ENCODE measurements at regions of chr4 and their contacts with region 1.

Region 1: DNA sequence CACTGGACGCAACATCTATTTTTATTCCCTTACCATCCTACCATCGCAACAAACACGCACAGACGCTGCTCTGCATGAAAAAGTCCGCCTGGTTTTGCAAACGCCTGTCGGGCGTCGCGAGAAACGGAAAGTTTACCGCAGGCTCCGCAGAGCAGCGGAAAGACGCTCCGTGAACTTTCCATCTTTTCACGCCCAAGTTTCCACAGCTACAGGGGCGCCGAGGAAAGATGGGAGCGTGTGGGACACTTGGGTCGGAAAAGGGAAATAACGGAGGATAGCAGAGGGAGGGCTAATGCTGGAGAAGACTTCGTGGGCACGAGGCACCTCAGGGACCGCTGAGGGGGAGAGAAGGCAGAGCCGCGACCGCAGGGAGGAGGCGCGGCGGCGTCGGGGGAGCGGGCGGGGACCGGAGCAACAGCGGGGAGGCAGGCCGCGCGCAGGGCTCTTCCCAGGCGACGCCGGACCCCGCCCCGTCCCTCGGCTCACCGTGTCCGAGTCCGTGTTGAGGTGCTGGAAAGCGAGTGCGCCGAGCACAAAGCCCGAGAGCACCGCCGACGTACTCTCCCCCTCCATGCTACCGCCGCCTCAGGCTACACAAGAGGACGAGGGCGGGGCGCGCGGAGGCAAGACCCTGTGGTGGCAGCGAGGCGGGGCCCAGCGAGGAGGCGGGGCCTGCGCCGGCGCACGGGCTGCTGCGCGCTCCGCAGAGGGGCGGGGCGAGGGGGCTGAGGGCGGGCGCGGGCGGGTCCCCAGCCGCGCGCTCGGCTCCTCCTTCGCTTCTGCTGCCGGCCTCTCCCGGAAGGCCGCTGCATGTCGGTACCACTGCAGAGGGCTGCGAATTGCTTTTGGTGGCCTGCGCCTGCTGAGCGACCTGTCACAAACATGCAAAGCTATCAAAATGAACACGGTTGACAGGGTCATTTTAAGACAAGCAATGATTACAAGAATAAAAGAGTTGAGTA is at the start of gene ABRAXAS1:
- DNase-seq: peak; percentile 98
- H3K4me3 Mint-ChIP-seq: peak within 1 kb of the TSS; percentile 96
- H3K27ac Mint-ChIP-seq: peak within 1 kb of the TSS; percentile 95
- H3K4me1 Mint-ChIP-seq: peaks cover 7% of the 10 kb centered on the region
- H3K27me3 Mint-ChIP-seq: no peaks in the 10 kb centered on the region
- total RNA-seq, gene ABRAXAS1: 10.4 and 12.0 TPM in 2 replicates

Region 2: GRCh38 chr4:83455281-83456129 is 29.3 kb before region 1 on chr4 and contains the starts of genes HELQ and MRPS18C:
- intact Hi-C with region 1: loop called (anchors 1 kb)
- DNase-seq: peak; percentile 98
- H3K4me3 Mint-ChIP-seq: peak within 1 kb of the TSS; percentile 99
- H3K27ac Mint-ChIP-seq: peak within 1 kb of the TSS; percentile 100
- H3K4me1 Mint-ChIP-seq: peaks cover 26% of the 10 kb centered on the region
- H3K27me3 Mint-ChIP-seq: no peaks in the 10 kb centered on the region
- total RNA-seq, gene HELQ: 9.1 and 11.4 TPM in 2 replicates
- total RNA-seq, gene MRPS18C: 83.9 and 86.6 TPM in 2 replicates

Measured in activated CD4-positive, alpha-beta T cell treated with anti-CD3 and anti-CD28 coated beads, Interleukin-2, amount 10 ng/mL, durations not matched to agents 24 days and 14 days (primary cell).